Motor neuron (in vitro differentiated cells): ENCODE measurements at regions of chrX and their contacts with region 1.

Region 1: GRCh38 chrX:70030301-70030767 is 19.4 kb downstream of the AWAT2 start:
- ATAC-seq: peak; percentile 43 to 77 (median 67)
- H3K4me3 ChIP-seq: no peak overlapping the region
- H3K27ac ChIP-seq: no peak overlapping the region
- H3K4me1 ChIP-seq: no peaks in the 10 kb centered on the region

Region 2: GRCh38 chrX:69538321-69538876 is 491.9 kb before region 1 on chrX:
- in situ Hi-C with region 1: loop called in 2 of 9 experiments (anchors 25 kb)
- ATAC-seq: peak; percentile 82 to 100 (median 97)
- H3K4me3 ChIP-seq: peak overlapping the region in 4 of 5 donors; percentile 28 to 35 (median 32)
- H3K27ac ChIP-seq: no peak overlapping the region
- H3K4me1 ChIP-seq: no peaks in the 10 kb centered on the region

Region 3: GRCh38 chrX:70096052-70096451 is 65.7 kb after region 1 on chrX:
- in situ Hi-C with region 1: loop called in 1 of 9 experiments (anchors 10 kb)
- ATAC-seq: no peak
- H3K4me3 ChIP-seq: no peak overlapping the region
- H3K27ac ChIP-seq: no peak overlapping the region
- H3K4me1 ChIP-seq: no peaks in the 10 kb centered on the region